PC-3 (cell line): ENCODE measurements at regions of chr3 and their contacts with region 1.

Region 1: GRCh38 chr3:189710620-189711402 is 79.6 kb downstream of the TP63 start:
- DNase-seq: peak; percentile 95
- ATAC-seq: peak; percentile 71
- H3K4me3 ChIP-seq: no peak overlapping the region
- H3K27ac ChIP-seq: peak overlapping the region; percentile 66
- H3K4me1 ChIP-seq: peaks cover 55% of the 10 kb centered on the region
- H3K27me3 ChIP-seq: no peaks in the 10 kb centered on the region
- CTCF ChIP-seq: no peak

Region 2: DNA sequence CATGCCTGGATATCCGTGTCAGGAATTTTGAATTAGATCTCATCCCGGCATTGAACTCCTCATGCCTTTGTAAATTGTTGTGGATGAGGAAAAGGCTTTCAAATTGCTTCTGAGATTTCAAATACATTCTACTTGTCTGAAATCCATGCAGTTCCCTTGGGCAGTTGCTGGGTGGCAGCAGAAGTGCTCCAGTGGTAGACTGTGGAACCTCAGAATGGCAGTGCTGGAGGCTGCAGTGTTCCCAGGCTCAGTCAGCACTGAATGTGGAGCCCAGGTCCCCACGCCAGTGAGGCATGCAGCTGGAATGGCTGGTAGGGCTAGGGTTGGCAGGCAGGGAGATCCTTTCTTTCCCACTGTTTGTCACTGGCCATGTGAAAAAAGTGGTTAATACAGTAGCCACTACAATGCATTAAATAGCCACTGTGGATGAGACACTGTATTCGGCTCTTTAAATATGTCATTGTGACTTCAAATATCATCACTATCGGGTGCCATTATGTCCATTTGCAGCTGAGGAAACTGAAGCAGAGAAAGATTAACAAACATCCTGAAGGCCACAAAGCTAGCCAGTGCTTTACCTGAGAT is 440.5 kb before region 1 on chr3:
- CTCF ChIA-PET with region 1: interaction called, 3 read pairs
- POLR2A ChIA-PET with region 1: interaction called, 4 read pairs
- intact Hi-C with region 1: loop called (anchors 2 kb)
- DNase-seq: peak; percentile 93
- ATAC-seq: peak; percentile 86
- H3K4me3 ChIP-seq: no peak overlapping the region
- H3K27ac ChIP-seq: peak overlapping the region; percentile 38
- H3K4me1 ChIP-seq: peaks cover 61% of the 10 kb centered on the region
- H3K27me3 ChIP-seq: no peaks in the 10 kb centered on the region
- CTCF ChIP-seq: peak; percentile 94

Region 3: GRCh38 chr3:189304446-189305351 is 406.1 kb before region 1 on chr3:
- CTCF ChIA-PET with region 1: no interaction called
- POLR2A ChIA-PET with region 1: interaction called, 3 read pairs
- intact Hi-C with region 1: loop called (anchors 1 kb)
- DNase-seq: peak; percentile 99
- ATAC-seq: peak; percentile 83
- H3K4me3 ChIP-seq: peak overlapping the region; percentile 48; the same call in 1 of the 2 replicates
- H3K27ac ChIP-seq: peak overlapping the region; percentile 94
- H3K4me1 ChIP-seq: peaks cover 40% of the 10 kb centered on the region
- H3K27me3 ChIP-seq: no peaks in the 10 kb centered on the region
- CTCF ChIP-seq: no peak

Region 4: GRCh38 chr3:189563866-189564563 is 146.8 kb before region 1 on chr3:
- CTCF ChIA-PET with region 1: interaction called, 3 read pairs
- POLR2A ChIA-PET with region 1: no interaction called
- intact Hi-C with region 1: loop called (anchors 2 kb)
- DNase-seq: peak; percentile 97
- ATAC-seq: peak; percentile 96
- H3K4me3 ChIP-seq: peak overlapping the region; percentile 28; the same call in 1 of the 2 replicates
- H3K27ac ChIP-seq: peak overlapping the region; percentile 66
- H3K4me1 ChIP-seq: peaks cover 23% of the 10 kb centered on the region
- H3K27me3 ChIP-seq: no peaks in the 10 kb centered on the region
- CTCF ChIP-seq: no peak; the same call in 1 of the 2 replicates

Region 5: DNA sequence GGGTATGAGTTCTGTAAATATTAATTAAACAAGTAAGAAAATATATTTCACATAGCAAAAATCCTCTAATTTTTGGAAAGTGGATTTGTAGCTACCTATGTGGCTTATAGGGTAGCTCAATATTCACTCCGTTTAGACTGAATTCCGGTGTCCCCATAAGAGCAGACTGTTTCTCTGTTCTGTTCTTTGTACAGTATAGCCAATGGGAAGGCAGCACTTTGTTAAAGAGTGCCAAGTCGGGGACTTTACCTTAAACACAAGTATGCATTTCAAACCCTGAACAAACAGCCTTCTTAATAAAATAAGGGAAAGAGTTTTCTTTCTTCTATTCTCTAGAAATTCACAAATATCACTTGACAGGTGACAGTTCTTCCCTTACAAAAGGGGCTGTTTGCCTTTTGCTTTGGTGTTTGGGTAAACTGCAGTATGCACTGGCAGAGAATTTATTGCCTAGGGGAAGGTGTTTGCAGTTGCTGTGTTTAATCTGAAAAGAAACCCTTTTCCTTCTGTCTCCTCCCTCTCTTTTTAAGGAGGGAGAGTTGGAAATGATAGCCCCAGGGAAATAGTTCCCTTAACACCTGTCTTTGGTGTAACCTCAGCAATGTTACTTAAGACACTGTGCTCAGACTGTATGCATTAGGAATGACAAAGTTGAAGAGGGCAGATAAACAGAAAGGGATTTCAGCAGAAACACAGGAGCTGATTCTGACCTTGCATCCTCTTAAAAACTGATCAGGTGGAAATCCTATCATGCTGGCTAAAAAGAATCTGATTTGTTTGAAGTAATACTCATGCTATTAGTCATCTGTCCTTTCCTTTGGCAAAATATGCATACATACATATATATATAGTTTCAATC is 45.6 kb after region 1 on chr3:
- CTCF ChIA-PET with region 1: no interaction called
- POLR2A ChIA-PET with region 1: no interaction called
- intact Hi-C with region 1: loop called (anchors 2 kb)
- DNase-seq: peak; percentile 96
- ATAC-seq: peak; percentile 94
- H3K4me3 ChIP-seq: peak overlapping the region; percentile 23; the same call in 1 of the 2 replicates
- H3K27ac ChIP-seq: peak overlapping the region; percentile 48
- H3K4me1 ChIP-seq: peaks cover 32% of the 10 kb centered on the region
- H3K27me3 ChIP-seq: no peaks in the 10 kb centered on the region
- CTCF ChIP-seq: no peak

Region 6: DNA sequence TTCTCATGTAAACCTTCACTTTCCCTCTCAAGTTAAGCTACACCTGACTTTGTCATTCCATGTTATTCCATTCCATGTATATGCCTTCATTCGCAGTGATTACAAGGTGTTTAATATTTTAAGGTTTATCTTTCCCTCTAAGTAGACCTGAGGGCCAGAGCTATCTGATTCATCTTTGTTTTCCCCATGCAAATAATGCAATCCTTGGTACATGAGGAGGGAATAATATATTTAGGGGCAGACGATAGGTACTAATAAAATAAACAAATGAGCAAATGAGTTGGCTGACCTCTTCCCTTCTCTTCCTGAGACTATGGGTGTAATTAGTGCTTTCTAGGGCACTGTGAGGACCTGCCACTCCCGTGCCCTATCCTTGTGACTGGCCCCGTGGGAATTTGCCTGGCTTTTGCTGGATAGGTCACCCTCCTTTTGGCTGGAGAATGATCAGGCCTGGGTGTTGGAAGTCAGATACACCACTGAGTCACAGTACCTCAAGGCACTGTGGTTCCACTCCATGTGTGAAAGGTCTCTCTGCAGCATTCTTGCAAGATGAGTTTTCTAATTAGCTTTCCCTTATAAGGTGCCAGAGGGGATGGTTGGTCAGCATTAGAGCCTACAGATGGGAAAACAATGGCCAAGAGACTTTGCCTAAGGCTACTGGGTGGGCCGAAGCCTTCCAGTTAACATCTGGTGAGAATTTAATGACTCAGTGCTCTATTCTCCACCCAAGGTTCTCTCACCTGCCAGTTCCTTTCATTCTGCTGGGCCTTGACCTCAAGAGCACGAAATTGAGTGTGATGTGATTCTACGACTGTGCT is 226.7 kb after region 1 on chr3:
- CTCF ChIA-PET with region 1: no interaction called
- POLR2A ChIA-PET with region 1: interaction called, 8 read pairs
- intact Hi-C with region 1: loop called (anchors 1 kb)
- DNase-seq: peak; percentile 99
- ATAC-seq: peak; percentile 88
- H3K4me3 ChIP-seq: no peak overlapping the region
- H3K27ac ChIP-seq: peak overlapping the region; percentile 83
- H3K4me1 ChIP-seq: peaks cover 41% of the 10 kb centered on the region
- H3K27me3 ChIP-seq: no peaks in the 10 kb centered on the region
- CTCF ChIP-seq: no peak

Region 7: GRCh38 chr3:190108804-190109203 is 398.0 kb after region 1 on chr3:
- CTCF ChIA-PET with region 1: no interaction called
- POLR2A ChIA-PET with region 1: no interaction called
- intact Hi-C with region 1: no loop called
- DNase-seq: no peak
- ATAC-seq: no peak
- H3K4me3 ChIP-seq: no peak overlapping the region
- H3K27ac ChIP-seq: no peak overlapping the region
- H3K4me1 ChIP-seq: no peaks in the 10 kb centered on the region
- H3K27me3 ChIP-seq: no peaks in the 10 kb centered on the region
- CTCF ChIP-seq: no peak